Spleen (tissue), 13 donors: ENCODE measurements at regions of chr10 and their contacts with region 1.

Region 1: GRCh38 chr10:30534465-30535144 is 94.9 kb downstream of the LYZL2 start:
- DNase-seq: peak; percentile 84
- H3K4me3 ChIP-seq: no peak overlapping the region
- H3K27ac ChIP-seq: peak overlapping the region in 3 of 8 donors; percentile 15 to 91 (median 24)
- H3K4me1 ChIP-seq: peaks cover 21 to 89% (median 61%) of the 10 kb centered on the region in 6 donors
- H3K27me3 ChIP-seq: no peaks in the 10 kb centered on the region
- CTCF ChIP-seq: peak; percentile 90 to 98 (median 94)
- POLR2A ChIP-seq: no peak

Region 2: DNA sequence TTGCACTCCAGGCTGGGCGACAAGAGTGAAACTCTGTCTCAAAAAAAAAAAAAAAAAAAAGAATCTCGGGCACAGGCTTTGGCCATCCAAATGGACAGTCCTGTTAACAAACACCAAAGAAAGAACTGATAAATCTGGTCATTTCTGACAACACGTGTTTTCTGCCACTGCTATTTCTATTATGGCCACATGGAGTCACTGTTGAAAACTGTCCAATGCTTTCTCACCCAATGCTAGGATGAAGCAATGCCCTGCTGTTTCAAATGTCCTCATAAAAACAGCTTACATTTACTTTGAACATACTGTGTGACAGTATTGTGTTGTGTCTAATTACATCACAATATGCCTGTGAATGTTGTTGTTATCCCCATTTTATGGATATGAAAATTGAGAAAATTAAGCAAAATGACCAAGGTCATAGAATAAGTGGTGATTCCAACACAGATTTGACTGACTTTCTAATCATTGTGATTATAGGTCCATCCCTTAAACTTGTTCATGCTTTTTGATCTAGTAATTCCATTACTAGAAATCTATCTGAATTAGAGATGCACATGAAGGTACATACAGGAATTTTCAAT is 120.5 kb before region 1 on chr10:
- intact Hi-C with region 1: loop called (anchors 2 kb)
- DNase-seq: no peak
- H3K4me3 ChIP-seq: no peak overlapping the region
- H3K27ac ChIP-seq: peak overlapping the region in 2 of 8 donors; percentile 46 to 47
- H3K4me1 ChIP-seq: peaks cover 10 to 58% (median 39%) of the 10 kb centered on the region in 6 donors
- H3K27me3 ChIP-seq: no peaks in the 10 kb centered on the region
- CTCF ChIP-seq: peak; percentile 70 to 94 (median 82)
- POLR2A ChIP-seq: no peak

Region 3: DNA sequence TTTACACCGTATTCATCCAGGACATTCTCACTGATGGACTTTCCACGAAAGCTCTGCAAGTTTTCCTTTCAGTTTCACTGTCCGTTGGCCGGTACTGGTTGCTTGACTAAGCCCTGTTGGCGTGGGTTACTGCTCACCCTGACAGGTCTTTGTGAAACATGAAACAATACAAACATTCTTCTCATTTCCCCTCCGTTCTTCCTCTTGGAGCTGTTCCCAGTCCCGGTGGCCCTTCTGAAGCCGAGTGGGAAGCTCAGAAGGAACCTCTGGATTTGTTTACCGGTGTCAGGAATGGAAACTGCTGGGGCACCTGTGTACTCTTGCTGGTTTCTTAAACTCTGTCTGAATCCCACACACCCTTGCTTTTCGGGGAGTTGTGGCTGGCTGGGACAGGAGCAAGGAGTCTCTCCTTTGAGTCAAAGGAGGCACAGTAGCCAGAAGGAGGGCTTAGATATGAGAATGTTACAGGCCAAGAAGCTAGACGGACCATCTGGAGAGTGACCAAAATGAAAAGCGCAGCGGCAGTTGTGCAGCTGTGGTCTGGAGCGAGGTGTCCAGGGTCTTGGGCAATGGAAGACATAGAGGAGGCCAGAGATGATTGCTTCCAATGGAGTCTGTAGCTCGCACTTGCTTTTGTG is 49.3 kb after region 1 on chr10:
- intact Hi-C with region 1: loop called (anchors 10 kb)
- DNase-seq: no peak
- H3K4me3 ChIP-seq: peak overlapping the region in 5 of 8 donors; percentile 5 to 62 (median 23)
- H3K27ac ChIP-seq: peak overlapping the region; percentile 66 to 86 (median 78)
- H3K4me1 ChIP-seq: peaks cover 7 to 57% (median 38%) of the 10 kb centered on the region in 6 donors
- H3K27me3 ChIP-seq: no peaks in the 10 kb centered on the region
- CTCF ChIP-seq: no peak
- POLR2A ChIP-seq: no peak